ENCODE measurements at regions of chr2 and their contacts with region 1.

Region 1: DNA sequence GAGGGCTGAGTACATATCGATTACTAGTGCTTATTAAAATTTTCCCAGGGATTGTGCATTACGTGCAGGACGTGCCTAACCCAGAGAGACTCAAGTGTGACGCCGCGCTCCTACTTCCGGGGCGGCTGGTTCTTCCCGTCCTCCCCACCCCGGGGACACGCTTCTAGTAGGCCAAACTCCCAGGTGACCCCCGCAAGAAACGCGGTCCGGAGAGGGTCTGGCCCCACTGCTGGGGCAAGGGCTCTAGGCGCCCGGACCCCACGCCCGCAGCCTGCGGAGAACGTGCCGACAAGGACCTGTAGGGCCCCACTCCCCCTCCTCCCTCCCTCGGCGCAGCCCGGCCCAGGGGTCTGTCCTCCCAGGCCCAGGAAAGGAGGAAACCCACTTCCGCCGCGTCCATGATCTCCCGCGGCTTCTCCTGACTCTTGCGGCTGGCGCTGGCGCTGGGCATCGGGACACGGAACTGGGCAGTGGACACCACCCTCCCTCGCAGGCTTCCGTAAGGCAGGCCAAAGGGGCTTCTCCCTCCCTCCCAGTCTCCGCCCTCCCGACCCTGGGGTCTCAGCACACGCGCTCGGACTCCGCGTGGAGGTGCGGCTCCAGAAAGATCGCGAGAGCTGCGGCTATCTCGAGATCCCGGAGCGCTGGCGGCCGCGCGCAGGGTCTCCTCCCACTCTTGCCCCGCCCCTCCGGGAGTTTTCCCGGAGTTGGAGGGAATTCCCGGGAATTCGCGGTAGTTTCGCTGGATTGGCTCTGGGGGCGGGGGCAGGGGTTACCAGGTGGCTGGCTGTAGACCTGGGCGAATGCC is at the start of gene DARS1:
- DNase-seq: peak; percentile 58 to 91 (median 76)
- ATAC-seq: peak; percentile 82
- H3K4me3 ChIP-seq: peak within 1 kb of the TSS; percentile 99
- H3K4me3 Mint-ChIP-seq: peak within 1 kb of the TSS; percentile 94
- H3K27ac ChIP-seq: peak within 1 kb of the TSS; percentile 95 to 99
- H3K27ac Mint-ChIP-seq: peak within 1 kb of the TSS; percentile 98
- H3K4me1 ChIP-seq: peaks cover 30% of the 10 kb centered on the region
- H3K4me1 Mint-ChIP-seq: peaks cover 50% of the 10 kb centered on the region
- H3K27me3 ChIP-seq: no peaks in the 10 kb centered on the region
- H3K27me3 Mint-ChIP-seq: no peaks in the 10 kb centered on the region
- CTCF ChIP-seq: no peak
- total RNA-seq, gene DARS1: 33.4 to 35.8 TPM

Region 2: GRCh38 chr2:135531231-135532228 is 453.7 kb before region 1 on chr2 and contains the start of gene R3HDM1:
- CTCF ChIA-PET with region 1: no interaction called
- POLR2A ChIA-PET with region 1: no interaction called
- intact Hi-C with region 1: loop called in 1 of 2 experiments (anchors 1 kb)
- DNase-seq: peak; percentile 88 to 99 (median 94)
- ATAC-seq: peak; percentile 75
- H3K4me3 ChIP-seq: peak within 1 kb of the TSS; percentile 74 to 84
- H3K4me3 Mint-ChIP-seq: no peak within 1 kb of the TSS
- H3K27ac ChIP-seq: peak within 1 kb of the TSS; percentile 79 to 91
- H3K27ac Mint-ChIP-seq: no peak within 1 kb of the TSS
- H3K4me1 ChIP-seq: peaks cover 15% of the 10 kb centered on the region
- H3K4me1 Mint-ChIP-seq: peaks cover 29% of the 10 kb centered on the region
- H3K27me3 ChIP-seq: no peaks in the 10 kb centered on the region
- H3K27me3 Mint-ChIP-seq: no peaks in the 10 kb centered on the region
- CTCF ChIP-seq: no peak
- total RNA-seq, gene R3HDM1: 35.3 to 48.2 TPM

Region 3: GRCh38 chr2:135913727-135914365 is 71.4 kb before region 1 on chr2:
- CTCF ChIA-PET with region 1: no interaction called
- POLR2A ChIA-PET with region 1: no interaction called
- intact Hi-C with region 1: loop called in 1 of 2 experiments (anchors 2 kb)
- DNase-seq: peak in 6 of 9 experiments; percentile 23 to 76 (median 52)
- ATAC-seq: peak; percentile 64
- H3K4me3 ChIP-seq: no peak overlapping the region
- H3K4me3 Mint-ChIP-seq: no peak overlapping the region
- H3K27ac ChIP-seq: no peak overlapping the region
- H3K27ac Mint-ChIP-seq: no peak overlapping the region
- H3K4me1 ChIP-seq: no peaks in the 10 kb centered on the region
- H3K4me1 Mint-ChIP-seq: peaks cover 4% of the 10 kb centered on the region
- H3K27me3 ChIP-seq: no peaks in the 10 kb centered on the region
- H3K27me3 Mint-ChIP-seq: no peaks in the 10 kb centered on the region
- CTCF ChIP-seq: peak; percentile 99

Region 4: DNA sequence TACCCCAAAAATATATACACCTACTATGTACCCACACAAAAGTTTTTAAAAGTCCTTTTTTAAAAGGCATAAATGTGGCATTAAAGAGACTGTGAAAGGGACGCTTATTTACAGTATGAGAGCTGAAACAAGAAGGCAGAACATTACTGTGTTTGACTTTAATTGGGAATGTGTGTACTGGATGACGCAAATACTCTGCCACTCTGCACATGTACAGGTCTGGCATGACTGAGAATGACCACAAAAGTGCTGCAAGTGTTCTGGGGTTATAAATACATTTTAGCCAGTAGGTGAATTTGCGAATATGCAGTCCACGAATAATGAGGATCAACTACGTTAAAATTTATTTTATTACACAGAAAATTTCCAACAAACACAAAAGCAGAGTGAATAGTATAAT is 11.2 kb before region 1 on chr2:
- CTCF ChIA-PET with region 1: interaction called, 3 read pairs
- POLR2A ChIA-PET with region 1: no interaction called
- intact Hi-C with region 1: loop called in 1 of 2 experiments (anchors 2 kb)
- DNase-seq: no peak
- ATAC-seq: no peak
- H3K4me3 ChIP-seq: no peak overlapping the region
- H3K4me3 Mint-ChIP-seq: no peak overlapping the region
- H3K27ac ChIP-seq: no peak overlapping the region
- H3K27ac Mint-ChIP-seq: no peak overlapping the region
- H3K4me1 ChIP-seq: no peaks in the 10 kb centered on the region
- H3K4me1 Mint-ChIP-seq: peaks cover 64% of the 10 kb centered on the region
- H3K27me3 ChIP-seq: no peaks in the 10 kb centered on the region
- H3K27me3 Mint-ChIP-seq: no peaks in the 10 kb centered on the region
- CTCF ChIP-seq: no peak

Region 5: GRCh38 chr2:136025057-136025973 is 40.1 kb after region 1 on chr2:
- CTCF ChIA-PET with region 1: no interaction called
- POLR2A ChIA-PET with region 1: no interaction called
- intact Hi-C with region 1: no loop called
- DNase-seq: peak in 6 of 9 experiments; percentile 17 to 68 (median 20)
- ATAC-seq: no peak
- H3K4me3 ChIP-seq: no peak overlapping the region
- H3K4me3 Mint-ChIP-seq: peak overlapping the region; percentile 43
- H3K27ac ChIP-seq: no peak overlapping the region
- H3K27ac Mint-ChIP-seq: peak overlapping the region; percentile 46
- H3K4me1 ChIP-seq: no peaks in the 10 kb centered on the region
- H3K4me1 Mint-ChIP-seq: peaks cover 6% of the 10 kb centered on the region
- H3K27me3 ChIP-seq: no peaks in the 10 kb centered on the region
- H3K27me3 Mint-ChIP-seq: no peaks in the 10 kb centered on the region
- CTCF ChIP-seq: no peak

Region 6: DNA sequence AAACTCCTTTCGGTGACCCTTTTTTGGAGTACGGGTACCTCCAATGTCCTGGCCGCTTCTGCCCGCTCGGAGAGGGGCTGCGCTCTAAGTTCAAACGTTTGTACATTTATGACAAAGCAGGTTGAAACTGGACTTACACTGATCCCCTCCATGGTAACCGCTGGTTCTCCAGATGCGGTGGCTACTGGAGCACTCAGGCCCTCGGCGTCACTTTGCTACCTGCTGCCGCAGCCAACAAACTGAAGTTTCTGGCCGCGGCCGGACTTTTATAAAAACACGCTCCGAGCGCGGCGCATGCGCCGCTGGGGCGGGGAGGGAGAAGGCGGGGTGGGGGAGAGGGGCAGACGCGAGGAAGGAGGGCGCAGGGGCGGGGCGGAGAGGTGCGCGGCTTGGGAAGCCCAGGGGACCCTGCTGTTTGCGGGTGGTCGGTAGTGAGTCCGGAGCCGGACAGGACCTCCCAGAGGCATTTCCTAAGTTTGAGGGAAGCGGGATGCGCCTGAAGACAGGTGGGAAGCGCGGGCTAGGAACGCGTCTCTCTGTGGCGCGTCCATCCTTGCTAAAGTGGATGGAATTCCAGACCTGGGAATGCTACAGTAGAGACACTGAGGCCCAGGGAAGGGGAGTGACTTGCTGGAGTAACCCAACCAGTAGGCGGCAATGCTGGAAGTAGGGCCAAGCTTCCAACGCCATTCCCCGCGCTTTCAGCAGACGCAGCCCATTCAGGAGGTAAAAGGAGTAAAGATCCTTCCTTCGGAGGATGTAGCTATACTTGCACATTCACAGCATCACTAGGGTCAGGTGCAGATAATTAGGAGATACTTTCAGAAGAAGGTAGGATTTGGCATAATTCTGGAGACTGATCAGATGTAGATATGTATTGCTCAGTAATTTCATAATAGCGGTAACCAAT is 132.9 kb after region 1 on chr2 and contains the start of gene CXCR4:
- CTCF ChIA-PET with region 1: no interaction called
- POLR2A ChIA-PET with region 1: interaction called, 5 read pairs
- intact Hi-C with region 1: loop called in 1 of 2 experiments (anchors 1 kb)
- DNase-seq: peak; percentile 92 to 99 (median 94)
- ATAC-seq: peak; percentile 35
- H3K4me3 ChIP-seq: peak within 1 kb of the TSS; percentile 77 to 83
- H3K4me3 Mint-ChIP-seq: peak within 1 kb of the TSS; percentile 97
- H3K27ac ChIP-seq: peak within 1 kb of the TSS; percentile 87 to 100
- H3K27ac Mint-ChIP-seq: peak within 1 kb of the TSS; percentile 100
- H3K4me1 ChIP-seq: peaks cover 60% of the 10 kb centered on the region
- H3K4me1 Mint-ChIP-seq: peaks cover 64% of the 10 kb centered on the region
- H3K27me3 ChIP-seq: no peaks in the 10 kb centered on the region
- H3K27me3 Mint-ChIP-seq: no peaks in the 10 kb centered on the region
- CTCF ChIP-seq: no peak
- total RNA-seq, gene CXCR4: 2,159 to 2,188 TPM

Region 7: DNA sequence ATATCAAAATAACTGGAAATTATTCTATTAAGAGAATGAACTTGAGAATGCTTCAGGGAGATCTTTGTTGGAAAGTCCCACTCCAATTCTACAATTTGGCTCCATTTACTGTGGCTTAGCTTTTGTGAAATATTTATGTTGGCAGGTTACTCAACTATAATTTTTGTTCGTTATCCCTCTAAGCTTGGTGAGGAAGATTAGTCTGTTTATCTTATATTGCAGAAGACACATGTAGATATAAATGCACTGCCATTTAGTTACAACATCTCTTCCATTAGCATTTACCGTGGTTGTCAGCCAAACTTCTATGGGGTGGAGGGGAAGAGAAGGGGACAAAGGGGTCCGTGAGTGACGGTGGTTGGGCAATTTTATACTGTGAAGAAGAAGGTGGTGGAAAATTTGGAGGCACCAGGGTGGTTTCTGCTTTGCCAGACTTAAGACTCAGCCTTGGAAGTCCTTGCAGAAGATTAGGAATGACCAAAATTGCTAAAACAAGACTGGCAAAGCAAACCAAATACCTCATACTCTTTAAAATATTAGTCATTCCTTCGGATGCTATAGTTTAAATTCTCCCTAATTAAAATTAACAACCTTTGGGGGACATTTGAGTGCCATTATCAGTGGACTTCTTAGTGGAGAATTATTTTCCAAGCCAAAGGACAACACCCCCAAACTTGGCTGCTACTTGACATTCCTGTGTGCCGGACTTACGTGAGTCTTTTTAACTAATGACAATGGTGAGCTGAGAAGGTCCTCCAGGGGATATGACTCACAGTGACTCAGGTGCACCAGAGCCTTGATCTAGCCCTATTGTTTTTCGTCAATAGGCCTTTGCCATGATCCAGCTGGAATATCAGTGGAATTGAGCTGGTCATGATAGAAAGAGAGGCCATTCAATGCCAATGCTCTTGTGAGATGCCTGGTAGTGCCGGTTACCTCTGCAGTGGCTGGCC is 250.5 kb after region 1 on chr2:
- CTCF ChIA-PET with region 1: no interaction called
- POLR2A ChIA-PET with region 1: no interaction called
- intact Hi-C with region 1: no loop called
- DNase-seq: no peak
- ATAC-seq: no peak
- H3K4me3 ChIP-seq: no peak overlapping the region
- H3K4me3 Mint-ChIP-seq: no peak overlapping the region
- H3K27ac ChIP-seq: no peak overlapping the region
- H3K27ac Mint-ChIP-seq: no peak overlapping the region
- H3K4me1 ChIP-seq: peaks cover 21% of the 10 kb centered on the region
- H3K4me1 Mint-ChIP-seq: peaks cover 36% of the 10 kb centered on the region
- H3K27me3 ChIP-seq: no peaks in the 10 kb centered on the region
- H3K27me3 Mint-ChIP-seq: no peaks in the 10 kb centered on the region
- CTCF ChIP-seq: no peak

Region 8: GRCh38 chr2:136378712-136379595 is 393.7 kb after region 1 on chr2:
- CTCF ChIA-PET with region 1: interaction called, 10 read pairs
- POLR2A ChIA-PET with region 1: interaction called, 3 read pairs
- intact Hi-C with region 1: loop called (anchors 2 kb)
- DNase-seq: peak; percentile 57 to 88 (median 81)
- ATAC-seq: peak; percentile 40
- H3K4me3 ChIP-seq: no peak overlapping the region
- H3K4me3 Mint-ChIP-seq: no peak overlapping the region
- H3K27ac ChIP-seq: no peak overlapping the region
- H3K27ac Mint-ChIP-seq: peak overlapping the region; percentile 72
- H3K4me1 ChIP-seq: peaks cover 46% of the 10 kb centered on the region
- H3K4me1 Mint-ChIP-seq: peaks cover 71% of the 10 kb centered on the region
- H3K27me3 ChIP-seq: no peaks in the 10 kb centered on the region
- H3K27me3 Mint-ChIP-seq: no peaks in the 10 kb centered on the region
- CTCF ChIP-seq: peak; percentile 86

Region 9: GRCh38 chr2:136801693-136802092 is 816.5 kb after region 1 on chr2:
- CTCF ChIA-PET with region 1: no interaction called
- POLR2A ChIA-PET with region 1: no interaction called
- intact Hi-C with region 1: no loop called
- DNase-seq: no peak
- ATAC-seq: no peak
- H3K4me3 ChIP-seq: no peak overlapping the region
- H3K4me3 Mint-ChIP-seq: no peak overlapping the region
- H3K27ac ChIP-seq: no peak overlapping the region
- H3K27ac Mint-ChIP-seq: no peak overlapping the region
- H3K4me1 ChIP-seq: no peaks in the 10 kb centered on the region
- H3K4me1 Mint-ChIP-seq: no peaks in the 10 kb centered on the region
- H3K27me3 ChIP-seq: no peaks in the 10 kb centered on the region
- H3K27me3 Mint-ChIP-seq: peaks cover 3% of the 10 kb centered on the region
- CTCF ChIP-seq: no peak

Region 10: GRCh38 chr2:137912371-137912770 is 1927.1 kb after region 1 on chr2:
- CTCF ChIA-PET with region 1: no interaction called
- POLR2A ChIA-PET with region 1: no interaction called
- intact Hi-C with region 1: no loop called
- DNase-seq: no peak
- ATAC-seq: no peak
- H3K4me3 ChIP-seq: no peak overlapping the region
- H3K4me3 Mint-ChIP-seq: no peak overlapping the region
- H3K27ac ChIP-seq: no peak overlapping the region
- H3K27ac Mint-ChIP-seq: no peak overlapping the region
- H3K4me1 ChIP-seq: no peaks in the 10 kb centered on the region
- H3K4me1 Mint-ChIP-seq: no peaks in the 10 kb centered on the region
- H3K27me3 ChIP-seq: no peaks in the 10 kb centered on the region
- H3K27me3 Mint-ChIP-seq: no peaks in the 10 kb centered on the region
- CTCF ChIP-seq: no peak

Measured in CD8-positive, alpha-beta T cell (primary cell).